RWPE1 (cell line): ENCODE measurements at regions of chr17 and their contacts with region 1.

Region 1: DNA sequence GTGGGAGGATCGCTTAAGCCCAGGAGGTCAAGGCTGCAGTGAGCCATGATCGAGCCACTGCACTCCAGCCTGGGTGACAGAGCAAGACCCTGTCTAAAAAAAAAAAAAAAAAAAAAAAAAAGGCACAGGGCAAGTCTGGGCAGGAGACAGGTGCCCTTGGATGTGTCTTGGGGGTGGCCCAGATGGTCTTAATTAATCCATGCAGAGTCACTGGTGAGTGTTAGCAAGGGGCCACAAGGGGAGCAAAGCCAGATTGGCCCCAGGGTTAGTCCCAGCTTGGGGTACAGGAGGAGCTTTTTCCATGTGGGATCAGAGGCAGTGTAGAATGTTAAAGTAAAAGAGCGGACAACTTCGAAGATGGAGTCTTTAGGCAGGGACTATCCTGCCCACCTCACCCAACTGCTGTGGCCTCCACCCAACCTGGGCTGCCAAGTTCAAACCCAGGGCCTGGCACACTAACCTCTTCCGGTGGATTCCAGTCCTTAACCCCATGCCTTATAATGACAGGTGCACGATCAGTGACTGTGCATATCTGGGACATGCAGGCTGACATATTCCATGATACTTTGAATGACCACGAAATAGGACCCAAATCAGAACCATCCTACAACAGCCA is 32.2 kb upstream of the MFSD6L start:
- DNase-seq: no peak
- H3K27ac ChIP-seq: no peak overlapping the region
- CTCF ChIP-seq: no peak

Region 2: GRCh38 chr17:8581002-8581658 is 250.2 kb before region 1 on chr17:
- CTCF ChIA-PET with region 1: no interaction called
- POLR2A ChIA-PET with region 1: interaction called, 18 read pairs
- DNase-seq: peak; percentile 68
- H3K27ac ChIP-seq: peak overlapping the region; percentile 63; the same call in 1 of the 2 replicates
- CTCF ChIP-seq: no peak